ENCODE measurements at regions of chr16 and their contacts with region 1.

Region 1: GRCh38 chr16:106623-107324 is 28.7 kb downstream of the MPG start:
- DNase-seq: peak; percentile 34
- H3K4me3 ChIP-seq: no peak overlapping the region
- CTCF ChIP-seq: peak; percentile 81

Region 2: DNA sequence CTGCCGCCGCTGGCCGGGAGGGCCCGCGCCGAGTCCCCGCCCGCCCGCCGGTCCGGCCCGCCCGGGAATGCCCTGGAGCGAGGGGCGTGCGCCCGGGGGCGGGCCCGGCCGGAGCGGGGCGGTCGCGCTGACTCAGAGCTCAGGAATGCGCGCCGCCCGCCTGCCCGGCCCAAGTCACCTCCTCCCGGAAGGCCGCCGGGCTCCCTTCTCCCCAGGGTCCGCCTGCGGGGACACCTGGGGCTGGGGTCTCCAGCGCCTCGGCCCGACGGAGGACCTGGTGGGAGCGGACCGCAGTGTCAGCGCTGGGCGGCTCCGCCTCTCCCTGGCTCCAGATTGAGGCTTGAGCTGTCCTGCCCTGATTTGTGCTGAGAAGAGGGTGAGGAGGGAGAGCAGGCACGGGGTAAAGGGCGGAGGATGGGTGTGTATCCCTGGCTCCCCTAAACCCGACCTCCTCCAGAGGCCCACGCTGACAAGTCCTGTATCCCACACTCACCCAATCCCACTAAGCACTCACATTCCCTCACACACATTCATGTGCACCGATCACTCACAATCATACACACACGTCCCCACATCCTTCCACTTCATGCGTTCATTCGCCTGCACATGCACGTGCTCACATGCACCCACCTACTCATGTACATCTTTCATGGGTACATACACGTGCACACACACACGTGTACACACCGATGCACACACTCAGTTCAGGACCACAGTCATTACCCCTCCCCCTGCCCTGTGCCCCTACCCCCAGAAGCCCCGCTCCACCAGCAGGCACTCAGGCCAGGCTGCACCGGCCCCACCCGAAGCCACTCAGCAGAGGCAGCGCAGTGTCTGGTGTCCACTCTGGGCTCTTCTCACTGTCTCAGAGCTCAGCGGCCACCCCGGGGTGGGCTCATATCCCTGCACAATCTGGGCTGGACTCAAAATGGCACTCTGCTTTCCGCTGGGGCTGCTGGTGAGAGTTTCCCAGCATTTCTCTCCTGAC is 33.9 kb before region 1 on chr16 and contains the start of gene RHBDF1:
- CTCF ChIA-PET with region 1: interaction called, 79 read pairs
- POLR2A ChIA-PET with region 1: no interaction called
- DNase-seq: no peak
- H3K4me3 ChIP-seq: peak within 1 kb of the TSS; percentile 76
- CTCF ChIP-seq: no peak

Region 3: DNA sequence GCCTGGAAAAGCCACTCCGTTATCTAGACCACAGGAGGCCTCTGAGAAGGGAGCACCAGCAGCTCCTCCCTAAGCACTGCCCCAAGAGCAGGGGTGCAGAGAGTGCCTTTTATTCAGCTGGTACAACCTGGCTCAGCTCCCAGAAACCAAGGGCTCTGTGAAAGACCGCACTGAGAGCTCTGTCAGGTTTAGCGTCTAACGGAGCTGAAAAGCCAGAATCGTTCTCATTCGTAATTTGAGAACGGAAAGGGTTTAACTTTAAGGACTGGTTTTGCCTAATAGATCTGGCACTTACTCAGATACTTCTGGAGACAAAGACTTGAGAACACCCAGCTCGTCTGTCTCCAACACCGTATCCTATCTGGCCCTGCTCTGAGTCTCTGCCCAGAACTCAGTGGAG is 15.3 kb before region 1 on chr16:
- CTCF ChIA-PET with region 1: interaction called, 32 read pairs
- POLR2A ChIA-PET with region 1: interaction called, 3 read pairs
- DNase-seq: no peak
- H3K4me3 ChIP-seq: no peak overlapping the region
- CTCF ChIP-seq: no peak

Region 4: DNA sequence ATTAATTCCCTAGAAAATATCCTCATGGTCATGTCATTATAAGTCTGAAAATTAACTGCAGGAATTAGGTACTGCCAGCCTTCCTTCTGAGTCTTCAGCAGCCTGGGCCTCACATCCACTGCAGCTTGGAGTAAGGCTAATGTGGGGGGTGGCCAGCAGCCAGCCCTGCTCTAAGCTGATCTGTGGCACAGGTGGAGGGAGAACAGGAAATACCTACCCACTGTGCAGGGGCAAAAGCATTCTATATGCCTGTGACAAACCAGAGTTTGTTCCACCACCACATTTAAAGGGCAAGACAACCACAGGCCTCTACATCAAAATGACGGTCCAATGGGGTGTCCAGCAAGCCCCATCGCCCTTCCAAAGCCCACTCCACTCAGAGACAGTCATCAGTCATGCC is 22.3 kb after region 1 on chr16:
- CTCF ChIA-PET with region 1: interaction called, 41 read pairs
- POLR2A ChIA-PET with region 1: no interaction called
- DNase-seq: no peak
- H3K4me3 ChIP-seq: no peak overlapping the region
- CTCF ChIP-seq: no peak

Region 5: GRCh38 chr16:180938-181667 is 74.3 kb after region 1 on chr16:
- CTCF ChIA-PET with region 1: interaction called, 126 read pairs
- POLR2A ChIA-PET with region 1: interaction called, 5 read pairs
- DNase-seq: no peak
- H3K4me3 ChIP-seq: peak overlapping the region; percentile 48
- CTCF ChIP-seq: peak; percentile 98

Region 6: DNA sequence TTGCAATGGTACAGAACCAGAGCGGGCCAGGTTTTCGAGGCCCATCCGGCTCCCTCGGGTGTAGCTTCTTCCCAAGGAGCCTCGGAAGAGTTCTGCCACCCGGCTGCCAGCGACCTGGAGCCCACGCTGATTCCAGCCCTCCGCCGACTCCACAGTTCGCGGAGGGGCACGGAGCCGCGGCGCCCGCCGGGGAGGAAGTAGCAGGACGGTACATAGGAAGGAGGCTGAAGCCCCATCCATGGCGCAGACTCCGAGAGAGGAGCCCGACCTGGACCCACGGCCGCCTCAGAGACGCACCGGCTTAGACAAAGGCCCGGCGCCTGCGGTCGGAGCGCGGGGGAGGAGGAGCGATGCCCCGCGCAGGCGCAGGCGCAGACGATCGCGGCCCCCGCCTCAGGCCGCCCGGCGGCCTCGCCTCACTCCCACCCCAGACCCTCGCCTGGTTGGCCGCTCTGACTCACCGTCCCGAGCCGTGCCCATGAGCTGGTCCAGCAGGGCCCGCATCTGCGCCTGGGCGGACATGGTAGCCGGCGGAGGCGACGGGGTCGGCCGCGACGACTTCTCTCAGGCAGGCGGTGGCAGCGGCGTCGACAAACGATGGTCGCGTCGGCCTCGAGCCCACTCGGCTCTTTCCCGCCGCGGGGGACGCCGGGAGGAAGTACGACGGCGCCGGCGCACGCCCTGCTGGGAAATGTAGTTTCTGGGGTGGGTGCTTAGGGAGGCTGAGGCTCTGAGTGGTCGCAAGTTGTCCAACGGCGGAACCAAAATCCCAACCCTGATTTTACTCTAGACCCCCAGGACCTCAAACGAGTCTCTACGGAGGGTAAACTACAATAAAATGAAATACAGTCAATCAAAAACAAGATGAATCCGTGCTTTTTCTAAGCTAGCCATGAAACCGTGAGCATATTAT is 122.3 kb after region 1 on chr16 and contains the start of gene LUC7L:
- CTCF ChIA-PET with region 1: interaction called, 19 read pairs
- POLR2A ChIA-PET with region 1: no interaction called
- DNase-seq: no peak
- H3K4me3 ChIP-seq: peak within 1 kb of the TSS; percentile 97
- CTCF ChIP-seq: no peak